Dendritic cell treated with granulocyte-macrophage colony-stimulating factor and Interleukin-4, amounts not matched to agents 40 ng/mL and 50 ng/mL, for 4 days (primary cell): ENCODE measurements at regions of chr2 and their contacts with region 1.

Region 1: DNA sequence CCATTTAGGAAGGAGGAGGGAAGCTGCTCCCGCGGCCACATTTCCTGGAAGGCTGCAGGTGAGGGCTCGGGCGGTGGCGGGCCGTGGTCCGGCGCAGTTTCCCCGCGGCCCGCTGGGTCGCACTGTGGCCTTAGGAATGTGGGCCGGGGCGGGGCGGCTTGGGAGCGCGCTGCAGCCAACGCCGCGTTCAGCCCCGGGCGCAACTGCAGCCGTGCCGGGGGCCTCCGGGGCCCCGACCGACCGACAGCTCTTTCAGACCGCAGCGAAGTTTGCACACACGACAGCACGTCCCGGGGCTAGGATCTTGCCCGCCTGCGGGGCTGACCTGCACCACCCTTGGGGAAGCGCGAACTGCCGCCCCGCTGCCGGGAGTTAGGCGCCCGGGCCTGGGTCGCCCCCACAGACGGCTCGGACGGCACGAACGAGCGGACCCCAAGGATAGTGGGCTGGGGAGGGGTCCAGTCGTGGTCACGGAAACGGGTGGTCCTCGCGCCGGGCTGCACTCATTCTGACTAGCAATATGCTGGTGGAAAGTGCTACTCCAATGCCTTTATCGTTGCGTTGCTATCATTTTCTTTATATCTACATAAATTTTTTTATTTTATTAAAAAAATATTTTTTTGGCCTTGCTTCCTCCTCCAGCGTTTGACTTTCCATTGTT is 69.9 kb upstream of the DLX2 start:
- H3K4me3 Mint-ChIP-seq: peak overlapping the region; percentile 82
- H3K27ac Mint-ChIP-seq: peak overlapping the region; percentile 67
- H3K4me1 Mint-ChIP-seq: peaks cover 26% of the 10 kb centered on the region
- H3K27me3 Mint-ChIP-seq: peaks cover 13% of the 10 kb centered on the region

Region 2: GRCh38 chr2:171999604-172000469 is 172.8 kb before region 1 on chr2 and contains the start of gene METAP1D:
- intact Hi-C with region 1: no loop called
- H3K4me3 Mint-ChIP-seq: peak within 1 kb of the TSS; percentile 92
- H3K27ac Mint-ChIP-seq: peak within 1 kb of the TSS; percentile 89
- H3K4me1 Mint-ChIP-seq: peaks cover 10% of the 10 kb centered on the region
- H3K27me3 Mint-ChIP-seq: peaks cover 12% of the 10 kb centered on the region

Region 3: DNA sequence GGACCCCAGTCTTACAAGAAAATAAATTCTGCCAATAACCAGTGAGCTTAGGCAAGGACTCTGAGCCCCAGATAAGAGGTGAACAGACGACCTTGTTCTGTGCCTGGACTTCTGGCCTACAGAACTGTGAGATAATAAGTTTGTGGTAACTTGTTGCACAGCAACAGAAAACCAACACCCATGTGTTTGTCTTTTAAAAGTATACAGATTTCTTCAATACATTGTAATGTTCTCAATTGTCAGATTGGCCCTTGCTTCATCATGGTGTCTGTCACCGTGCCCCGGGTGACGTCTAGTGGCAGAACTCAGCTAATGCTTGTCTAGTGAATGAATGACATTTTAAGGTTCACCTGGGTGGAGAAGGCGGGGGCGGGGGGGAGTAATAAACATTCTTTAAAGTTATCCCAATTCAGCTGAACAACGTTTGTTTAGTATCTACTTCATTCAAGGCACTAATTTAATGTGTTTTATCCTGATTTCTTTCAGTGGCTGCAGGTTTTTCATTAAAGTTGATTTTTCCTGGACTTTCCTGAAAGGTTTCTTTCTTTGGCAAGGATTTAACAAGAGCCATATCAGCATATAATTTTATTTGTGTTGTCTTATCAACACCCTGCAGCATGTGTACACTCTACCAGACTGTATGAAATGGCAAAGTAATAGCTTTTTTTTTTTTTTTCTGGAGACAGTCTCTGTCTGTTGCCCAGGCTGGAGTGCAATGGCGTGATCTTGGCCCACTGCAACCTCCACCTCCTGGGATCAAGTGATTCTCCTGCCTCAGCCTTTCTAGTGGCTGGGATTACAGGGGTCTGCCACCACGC is 53.8 kb after region 1 on chr2:
- intact Hi-C with region 1: loop called (anchors 2 kb)
- H3K4me3 Mint-ChIP-seq: no peak overlapping the region
- H3K27ac Mint-ChIP-seq: no peak overlapping the region
- H3K4me1 Mint-ChIP-seq: peaks cover 12% of the 10 kb centered on the region
- H3K27me3 Mint-ChIP-seq: peaks cover 8% of the 10 kb centered on the region